Heart left ventricle (tissue), 16 donors: ENCODE measurements at regions of chr2 and their contacts with region 1.

Region 1: GRCh38 chr2:64330281-64331113 is 123.5 kb upstream of the LGALSL start:
- DNase-seq: peak; percentile 78 to 84 (median 81)
- ATAC-seq: peak; percentile 59 to 77 (median 70)
- H3K4me3 ChIP-seq: peak overlapping the region in 8 of 12 donors; percentile 21 to 38 (median 33)
- H3K27ac ChIP-seq: peak overlapping the region; percentile 48 to 90 (median 77)
- H3K4me1 ChIP-seq: peaks cover 3 to 52% (median 37%) of the 10 kb centered on the region in 12 donors
- H3K27me3 ChIP-seq: no peaks in the 10 kb centered on the region
- CTCF ChIP-seq: peak; percentile 86 to 97 (median 93)
- POLR2A ChIP-seq: no peak

Region 2: DNA sequence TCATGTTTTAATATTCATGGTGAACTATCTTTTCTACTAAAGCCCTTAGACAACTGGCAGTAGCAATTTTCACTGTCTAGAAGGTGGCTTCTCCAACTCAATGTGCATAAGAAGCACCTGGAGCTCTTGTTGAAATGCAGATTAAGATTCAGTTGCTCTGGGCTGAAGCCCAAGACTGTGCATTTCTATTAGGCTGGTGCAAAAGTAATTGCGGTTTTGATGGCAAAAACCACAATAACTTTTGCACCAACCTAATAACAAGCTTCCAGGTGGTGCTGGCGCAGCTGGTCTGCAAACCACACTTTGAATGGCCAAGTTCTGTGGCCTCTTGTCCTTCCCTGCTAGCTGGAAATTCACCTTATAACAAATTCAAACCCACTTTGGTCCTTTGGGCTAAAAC is 284.6 kb before region 1 on chr2:
- intact Hi-C with region 1: loop called in 8 of 10 experiments (anchors 1 to 5 kb)
- DNase-seq: no peak
- ATAC-seq: no peak
- H3K4me3 ChIP-seq: no peak overlapping the region
- H3K27ac ChIP-seq: no peak overlapping the region
- H3K4me1 ChIP-seq: peaks cover 0 to 7% (median 0%) of the 10 kb centered on the region in 12 donors
- H3K27me3 ChIP-seq: no peaks in the 10 kb centered on the region
- CTCF ChIP-seq: no peak
- POLR2A ChIP-seq: no peak

Region 3: DNA sequence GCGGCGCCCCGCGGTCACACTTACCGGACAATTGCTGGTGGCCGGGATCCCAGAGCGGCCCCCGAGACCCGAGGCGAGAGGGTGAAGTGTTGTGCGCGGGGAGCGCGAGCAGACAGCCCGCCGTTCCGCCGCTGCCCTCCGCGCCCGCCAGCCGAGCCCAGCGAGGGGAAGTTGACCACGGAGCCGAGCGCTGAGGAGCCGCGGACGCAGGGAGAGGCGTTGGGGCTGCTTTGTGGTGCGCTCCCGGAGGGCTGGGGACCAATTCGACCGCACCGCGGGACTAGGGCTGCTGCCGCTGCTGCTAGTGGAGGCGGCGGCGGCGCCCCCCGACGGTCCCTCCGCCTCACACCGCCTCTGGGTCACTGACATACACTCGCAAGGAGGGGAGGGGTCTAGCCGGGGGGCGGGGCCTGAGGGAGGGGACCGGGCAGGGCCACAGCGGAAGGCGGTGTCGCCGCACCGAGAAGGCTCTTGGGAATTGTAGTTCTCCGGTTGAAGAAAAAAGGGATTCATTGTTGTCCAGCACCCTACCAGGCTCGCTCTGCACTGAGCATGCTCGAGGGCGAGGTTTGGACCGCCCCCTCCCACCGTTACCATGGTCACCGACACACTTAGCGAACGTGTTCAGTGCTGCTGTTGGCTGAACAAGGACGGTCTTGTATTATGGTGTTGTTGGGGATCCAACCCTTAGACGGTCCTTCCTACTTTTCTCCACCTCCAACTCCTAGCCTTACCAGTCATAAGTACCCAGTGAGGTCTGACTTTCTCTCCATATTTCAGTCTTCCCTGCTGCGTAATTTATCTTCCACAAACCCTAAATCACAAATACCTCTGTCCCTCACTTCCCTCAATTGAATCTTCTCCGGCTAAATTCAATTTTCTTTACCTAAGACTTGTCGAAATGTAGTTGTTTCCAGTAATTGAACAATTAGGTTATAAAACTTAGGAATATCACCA is 186.2 kb before region 1 on chr2 and contains the start of gene PELI1:
- intact Hi-C with region 1: loop called in 2 of 10 experiments (anchors 5 kb)
- DNase-seq: peak; percentile 95 to 97 (median 96)
- ATAC-seq: peak; percentile 99 to 100 (median 100)
- H3K4me3 ChIP-seq: peak within 1 kb of the TSS; percentile 81 to 99 (median 94)
- H3K27ac ChIP-seq: peak within 1 kb of the TSS; percentile 94 to 99 (median 98)
- H3K4me1 ChIP-seq: peaks cover 0 to 32% (median 10%) of the 10 kb centered on the region in 12 donors
- H3K27me3 ChIP-seq: no peaks in the 10 kb centered on the region
- CTCF ChIP-seq: peak in 7 of 12 donors; percentile 21 to 56 (median 39)
- POLR2A ChIP-seq: peak; percentile 91 to 99
- total RNA-seq, gene PELI1: 5.9 to 14.6 (median 7.3) TPM

Region 4: DNA sequence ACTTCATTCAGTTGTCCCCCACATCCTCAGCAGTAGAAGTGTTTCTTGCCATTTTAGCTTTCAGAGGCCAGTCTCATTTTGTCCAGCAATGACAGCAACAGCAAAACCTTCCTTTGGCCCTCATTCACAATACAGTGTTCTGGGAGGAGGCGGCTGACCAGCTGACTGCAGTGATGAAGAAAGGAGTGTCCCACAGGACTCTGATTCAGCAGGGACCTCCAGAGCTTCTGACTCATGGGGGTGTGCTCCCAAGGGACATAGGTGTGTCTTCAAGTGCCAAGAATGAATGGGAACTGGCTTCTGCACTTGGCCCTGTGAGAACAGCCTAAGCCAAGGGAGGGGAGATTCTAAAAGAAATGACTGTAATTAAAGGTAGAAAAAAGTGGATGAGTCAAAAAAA is 39.3 kb before region 1 on chr2:
- intact Hi-C with region 1: no loop called
- DNase-seq: peak in 1 of 5 donors; percentile 62
- ATAC-seq: peak in 1 of 4 donors; percentile 51
- H3K4me3 ChIP-seq: no peak overlapping the region
- H3K27ac ChIP-seq: no peak overlapping the region
- H3K4me1 ChIP-seq: peaks cover 0 to 25% (median 10%) of the 10 kb centered on the region in 12 donors
- H3K27me3 ChIP-seq: no peaks in the 10 kb centered on the region
- CTCF ChIP-seq: no peak
- POLR2A ChIP-seq: no peak

Region 5: DNA sequence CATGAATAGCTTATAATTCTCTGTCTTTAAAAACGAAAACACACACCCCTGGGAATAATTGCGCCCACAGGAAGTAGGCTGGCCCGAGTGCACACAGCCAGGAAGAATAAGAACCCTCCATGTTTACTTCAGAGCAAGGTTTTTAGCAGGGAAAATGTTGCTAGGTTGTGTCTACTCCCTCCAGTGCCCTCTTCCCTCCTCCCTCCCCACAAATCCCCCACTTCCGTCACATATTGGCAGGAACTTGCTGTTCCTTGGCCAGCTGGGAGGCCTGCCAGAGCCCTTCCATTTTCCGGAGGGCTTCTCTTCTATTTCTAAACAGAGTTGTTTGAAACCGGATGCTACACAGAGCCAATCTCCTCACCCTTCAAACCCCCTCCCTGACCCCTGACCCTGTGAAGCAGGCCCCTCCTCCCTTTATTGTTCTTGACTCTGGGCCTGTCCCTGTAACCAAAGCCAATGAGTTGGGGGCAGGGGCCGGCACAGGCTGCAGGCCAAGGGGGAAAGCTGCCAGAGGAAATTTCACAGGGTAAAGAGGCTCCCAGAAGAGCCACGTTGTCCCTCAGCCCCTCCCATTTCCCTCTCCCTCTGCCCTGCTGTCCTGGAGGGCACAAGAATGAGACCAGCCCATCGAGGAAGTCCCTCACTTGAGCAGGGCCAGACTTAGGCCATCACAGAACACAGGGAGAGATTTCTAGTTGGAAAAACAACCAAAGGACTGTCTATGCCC is 73.7 kb after region 1 on chr2:
- intact Hi-C with region 1: loop called in 5 of 10 experiments (anchors 2 to 5 kb)
- DNase-seq: peak; percentile 89 to 92 (median 90)
- ATAC-seq: peak; percentile 89 to 94 (median 94)
- H3K4me3 ChIP-seq: peak overlapping the region in 8 of 12 donors; percentile 2 to 29 (median 6)
- H3K27ac ChIP-seq: peak overlapping the region; percentile 71 to 97 (median 86)
- H3K4me1 ChIP-seq: peaks cover 8 to 49% (median 36%) of the 10 kb centered on the region in 12 donors
- H3K27me3 ChIP-seq: no peaks in the 10 kb centered on the region
- CTCF ChIP-seq: no peak
- POLR2A ChIP-seq: no peak

Region 6: DNA sequence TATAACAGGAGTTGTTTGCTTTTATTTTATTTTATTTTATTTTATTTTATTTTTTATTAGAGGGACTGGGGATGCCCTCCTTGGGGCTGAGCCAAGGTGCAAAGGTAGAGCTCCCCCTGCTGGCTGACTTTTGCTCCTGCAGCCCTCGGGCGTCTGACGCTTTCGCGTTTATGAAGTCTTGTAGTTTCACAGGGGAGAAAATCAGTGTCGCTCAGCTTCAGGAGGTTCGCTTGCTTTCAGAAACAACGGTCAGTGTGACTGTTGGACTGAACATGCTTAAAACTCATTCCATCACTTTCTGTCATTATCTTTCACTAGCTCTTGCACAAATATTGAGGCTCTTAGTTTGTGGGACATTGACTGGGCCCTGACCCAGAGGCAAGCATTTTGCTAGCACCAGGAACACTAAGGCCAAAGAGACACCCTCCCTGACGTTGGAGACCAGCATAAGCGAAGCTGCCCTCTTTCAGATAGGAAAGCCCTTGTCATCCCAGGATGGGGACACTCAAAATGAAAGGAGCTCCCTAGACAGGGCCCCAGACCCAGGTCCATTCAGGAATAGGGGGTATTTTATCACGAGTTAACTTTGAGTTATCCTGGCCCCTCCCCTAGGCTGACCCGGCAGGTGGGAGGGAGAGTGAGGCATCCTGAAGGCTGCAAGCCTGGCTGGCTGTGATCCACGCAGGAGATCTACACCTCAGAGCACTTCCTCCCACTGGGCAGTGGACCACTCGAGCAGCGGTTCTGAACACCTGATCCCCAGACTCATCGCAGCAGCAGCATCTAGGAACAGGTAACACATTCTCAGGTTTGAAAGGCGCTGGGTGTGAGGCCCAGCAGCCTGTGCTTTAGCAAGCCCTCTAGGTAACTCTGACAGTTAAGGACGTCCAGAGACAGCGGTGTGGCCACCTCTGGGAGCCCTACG is 157.8 kb after region 1 on chr2:
- intact Hi-C with region 1: loop called (anchors 1 to 2 kb)
- DNase-seq: peak; percentile 52 to 84 (median 68)
- ATAC-seq: peak; percentile 48 to 76 (median 64)
- H3K4me3 ChIP-seq: no peak overlapping the region
- H3K27ac ChIP-seq: no peak overlapping the region
- H3K4me1 ChIP-seq: peaks cover 0 to 25% (median 8%) of the 10 kb centered on the region in 12 donors
- H3K27me3 ChIP-seq: peaks cover 0 to 3% (median 0%) of the 10 kb centered on the region in 9 donors
- CTCF ChIP-seq: peak; percentile 94 to 99 (median 98)
- POLR2A ChIP-seq: no peak

Region 7: GRCh38 chr2:64562148-64562784 is 231.8 kb after region 1 on chr2:
- intact Hi-C with region 1: loop called (anchors 1 to 5 kb)
- DNase-seq: no peak
- ATAC-seq: peak in 2 of 4 donors; percentile 44 to 51
- H3K4me3 ChIP-seq: no peak overlapping the region
- H3K27ac ChIP-seq: no peak overlapping the region
- H3K4me1 ChIP-seq: peaks cover 0 to 24% (median 2%) of the 10 kb centered on the region in 12 donors
- H3K27me3 ChIP-seq: no peaks in the 10 kb centered on the region
- CTCF ChIP-seq: peak in 11 of 12 donors; percentile 18 to 62 (median 40)
- POLR2A ChIP-seq: no peak

Region 8: DNA sequence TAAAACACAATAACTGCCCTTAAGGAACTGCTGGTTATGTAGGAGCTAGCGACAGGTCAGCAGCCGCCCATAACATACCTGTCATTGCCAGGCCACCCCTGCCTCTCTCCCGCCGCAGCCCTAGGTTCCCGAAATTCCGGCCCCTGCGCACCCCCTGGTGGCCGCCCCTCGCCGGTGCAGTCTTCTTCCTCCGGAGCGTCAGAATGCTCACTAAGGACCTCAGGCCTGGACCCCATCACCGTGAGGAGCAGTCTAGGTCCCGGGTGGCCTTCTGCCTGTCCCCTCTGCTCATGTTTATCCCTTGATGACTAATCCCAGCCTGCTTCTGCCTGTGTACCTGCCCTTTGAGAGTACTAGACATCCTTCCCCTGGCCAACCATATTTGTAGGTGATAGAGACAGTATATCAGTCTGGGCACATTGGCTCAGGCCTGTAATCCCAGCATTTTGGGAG is 543.0 kb after region 1 on chr2:
- intact Hi-C with region 1: loop called in 8 of 10 experiments (anchors 2 to 10 kb)
- DNase-seq: peak; percentile 68 to 88 (median 75)
- ATAC-seq: peak in 3 of 4 donors; percentile 76 to 82 (median 79)
- H3K4me3 ChIP-seq: peak overlapping the region in 8 of 12 donors; percentile 4 to 49 (median 30)
- H3K27ac ChIP-seq: no peak overlapping the region
- H3K4me1 ChIP-seq: peaks cover 0 to 22% (median 15%) of the 10 kb centered on the region in 12 donors
- H3K27me3 ChIP-seq: no peaks in the 10 kb centered on the region
- CTCF ChIP-seq: peak; percentile 91 to 99 (median 96)
- POLR2A ChIP-seq: peak in 1 of 2 donors; percentile 19